Head of caudate nucleus (tissue), 42 donors: ENCODE measurements at regions of chr7 and their contacts with region 1.

Region 1: GRCh38 chr7:322111-322671 is 32.2 kb downstream of the FOXL3 start:
- DNase-seq: peak; percentile 44 to 92 (median 80)

Region 2: GRCh38 chr7:264541-265191 is 57.5 kb before region 1 on chr7:
- intact Hi-C with region 1: no loop called
- DNase-seq: no peak

Region 3: GRCh38 chr7:636396-636795 is 314.2 kb after region 1 on chr7:
- intact Hi-C with region 1: loop called (anchors 5 kb)
- DNase-seq: peak in 31 of 42 donors; percentile 19 to 75 (median 42)

Region 4: GRCh38 chr7:774161-775109 is 452.2 kb after region 1 on chr7:
- intact Hi-C with region 1: loop called (anchors 2 kb)
- DNase-seq: peak; percentile 22 to 84 (median 62)

Region 5: DNA sequence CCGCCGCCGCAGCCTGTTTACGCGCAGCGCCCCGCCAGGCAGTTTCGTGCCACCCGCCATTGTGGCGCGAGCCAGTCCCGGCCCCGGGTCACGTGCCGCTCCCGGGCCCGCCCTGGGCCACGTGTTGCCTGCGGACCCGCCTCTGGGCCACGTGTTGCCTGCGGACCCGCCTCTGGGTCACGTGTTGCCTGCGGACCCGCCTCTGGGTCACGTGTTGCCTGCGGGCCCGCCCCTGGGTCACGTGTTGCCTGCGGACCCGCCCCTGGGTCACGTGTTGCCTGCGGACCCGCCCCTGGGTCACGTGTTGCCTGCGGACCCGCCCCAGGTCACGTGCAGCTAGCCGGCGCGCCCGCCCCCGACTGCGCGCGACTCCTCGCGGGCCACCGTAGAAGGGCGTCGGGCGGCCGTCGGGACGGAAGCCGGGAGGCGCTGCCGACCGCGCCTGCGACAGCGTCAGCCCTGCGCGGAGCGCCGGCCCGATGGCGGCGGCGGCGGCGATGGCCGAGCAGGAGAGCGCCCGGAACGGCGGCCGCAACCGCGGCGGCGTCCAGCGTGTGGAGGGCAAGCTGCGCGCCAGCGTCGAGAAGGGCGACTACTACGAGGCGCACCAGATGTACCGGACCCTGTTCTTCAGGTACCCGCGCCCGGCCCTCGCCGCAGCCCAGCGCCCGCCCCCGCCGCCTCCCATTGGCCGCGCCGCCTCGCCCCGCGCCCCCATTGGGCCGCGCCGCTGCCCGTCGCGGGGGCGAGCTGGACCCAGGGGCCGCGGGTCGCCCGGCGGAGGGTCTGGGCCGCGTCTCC is 554.2 kb after region 1 on chr7 and contains the start of gene GET4:
- intact Hi-C with region 1: loop called (anchors 10 kb)
- DNase-seq: peak; percentile 95 to 100 (median 98)